ENCODE measurements at regions of chr7 and their contacts with region 1.

Region 1: GRCh38 chr7:77903597-77903996 is 105.0 kb downstream of the PHTF2 start:
- DNase-seq: peak; percentile 15
- CTCF ChIP-seq: peak; percentile 37

Region 2: GRCh38 chr7:77798394-77799077 is 105.1 kb before region 1 on chr7 and contains the starts of genes PHTF2 and TMEM60:
- in situ Hi-C with region 1: loop called (anchors 10 kb)
- DNase-seq: peak; percentile 94
- CTCF ChIP-seq: peak; percentile 50

Region 3: DNA sequence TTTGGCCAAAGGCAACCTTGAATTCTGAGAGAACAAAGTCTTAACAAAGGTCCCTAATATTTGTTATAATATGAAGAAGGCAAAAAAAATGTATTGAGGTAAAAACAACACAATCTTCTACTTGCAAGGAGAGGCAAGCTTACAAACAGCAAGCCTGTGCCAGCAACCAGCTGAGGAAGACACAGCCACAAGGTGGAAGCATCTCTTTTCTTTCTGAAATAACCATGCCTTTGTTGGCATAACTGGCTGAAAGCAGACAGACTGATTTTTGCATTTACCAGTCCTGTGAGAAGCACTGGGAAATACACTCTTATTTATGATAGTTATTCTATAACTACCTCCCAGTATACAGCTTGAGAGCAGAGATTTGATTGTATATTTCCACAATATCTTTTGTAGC is 187.0 kb after region 1 on chr7:
- in situ Hi-C with region 1: no loop called
- DNase-seq: no peak
- CTCF ChIP-seq: no peak

Region 4: DNA sequence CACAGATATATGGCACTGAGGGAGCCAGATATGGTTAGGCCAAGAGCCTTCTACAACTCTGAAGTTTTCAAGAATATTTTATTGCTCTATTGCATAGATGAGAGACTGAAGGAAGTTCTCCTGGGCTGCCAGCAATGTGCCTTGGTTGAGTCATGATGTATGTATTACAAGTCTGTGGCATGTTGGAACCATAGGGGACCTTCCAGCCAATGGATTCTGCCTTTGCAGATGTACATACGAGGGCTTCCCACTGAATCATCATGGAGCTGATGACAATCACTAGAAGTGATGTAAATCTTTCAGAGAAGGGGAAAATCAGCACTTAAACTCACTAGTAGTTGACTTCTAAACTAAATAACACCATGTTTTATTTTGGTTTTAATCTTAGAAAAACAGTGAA is 314.5 kb after region 1 on chr7:
- in situ Hi-C with region 1: no loop called
- DNase-seq: no peak
- CTCF ChIP-seq: no peak